K562 (cell line): ENCODE measurements at regions of chr6 and their contacts with region 1.

Region 1: DNA sequence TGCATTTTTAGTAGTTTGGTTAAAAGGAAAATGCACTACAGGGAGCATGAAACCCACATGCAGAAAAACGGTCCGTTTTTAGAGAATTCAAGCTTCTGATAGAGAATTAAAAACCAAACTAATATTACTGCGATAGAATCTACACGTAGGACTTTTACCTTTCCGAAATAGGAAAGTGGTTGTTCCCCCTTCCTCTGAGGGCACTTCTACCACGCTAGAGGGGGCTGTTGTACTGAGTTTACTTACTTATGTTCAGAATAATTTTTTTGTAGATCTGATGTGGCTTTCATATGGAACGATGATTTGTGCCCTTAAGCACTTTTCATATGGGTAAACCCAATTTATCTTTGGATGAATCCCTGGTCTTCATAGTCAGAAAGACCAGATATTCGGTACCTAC is 264.3 kb upstream of the PLN start:
- DNase-seq: peak; percentile 39 to 62 (median 44)
- ATAC-seq: peak; percentile 88
- H3K4me3 ChIP-seq: no peak overlapping the region
- H3K27ac ChIP-seq: no peak overlapping the region
- H3K4me1 ChIP-seq: no peaks in the 10 kb centered on the region
- H3K27me3 ChIP-seq: peaks cover 4 to 8% of the 10 kb centered on the region in 2 experiments; a peak in 3 of 5 replicates
- CTCF ChIP-seq: peak; percentile 45 to 76 (median 67); a peak in 5 of 6 replicates
- EP300 ChIP-seq: no peak
- POLR2A ChIP-seq: no peak
- RAD21 ChIP-seq: peak; percentile 79 to 82

Region 2: DNA sequence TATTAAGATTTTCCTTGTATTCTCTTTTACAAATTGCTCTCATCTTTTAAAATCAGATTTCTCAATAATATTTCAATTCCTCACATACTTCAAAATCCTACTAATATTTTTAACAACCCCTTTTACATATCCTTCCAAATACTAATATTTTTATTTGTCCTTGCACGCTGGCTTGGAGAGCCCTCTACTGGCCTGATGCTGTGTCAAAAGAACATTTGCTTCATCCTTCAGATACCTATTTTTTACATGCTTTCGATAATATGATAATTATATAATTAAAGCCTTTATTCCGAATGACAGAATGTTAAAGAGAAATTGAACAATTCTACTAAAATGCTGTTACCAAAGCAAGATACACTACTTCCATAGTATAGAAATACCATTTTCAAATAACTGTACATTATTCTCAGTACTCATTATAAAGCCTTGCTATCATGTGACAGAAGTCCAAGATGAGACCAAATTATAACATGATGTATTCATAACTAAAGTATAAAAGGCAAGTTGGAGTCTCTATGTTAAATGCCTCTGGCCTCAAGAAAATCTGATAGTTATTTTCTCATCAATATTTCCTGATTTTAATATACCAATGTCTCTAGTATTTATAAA is 225.3 kb after region 1 on chr6:
- CTCF ChIA-PET with region 1: interaction called, 5 read pairs
- POLR2A ChIA-PET with region 1: no interaction called
- in situ Hi-C with region 1: no loop called
- intact Hi-C with region 1: loop called (anchors 2 kb)
- DNase-seq: peak in 3 of 4 experiments; percentile 11 to 41 (median 16)
- ATAC-seq: no peak
- H3K4me3 ChIP-seq: no peak overlapping the region
- H3K27ac ChIP-seq: no peak overlapping the region
- H3K4me1 ChIP-seq: peaks cover 3 to 10% of the 10 kb centered on the region in 2 experiments; a peak in 2 of 5 replicates
- H3K27me3 ChIP-seq: no peaks in the 10 kb centered on the region
- CTCF ChIP-seq: peak; percentile 47 to 66 (median 60); a peak in 5 of 6 replicates
- EP300 ChIP-seq: no peak
- POLR2A ChIP-seq: no peak
- RAD21 ChIP-seq: peak; percentile 54 to 63

Region 3: GRCh38 chr6:118580585-118581419 is 297.0 kb after region 1 on chr6:
- CTCF ChIA-PET with region 1: interaction called, 3 read pairs
- POLR2A ChIA-PET with region 1: no interaction called
- in situ Hi-C with region 1: no loop called
- intact Hi-C with region 1: loop called (anchors 1 kb)
- DNase-seq: peak; percentile 37 to 72 (median 40)
- ATAC-seq: peak; percentile 93
- H3K4me3 ChIP-seq: no peak overlapping the region
- H3K27ac ChIP-seq: no peak overlapping the region
- H3K4me1 ChIP-seq: peaks cover 0 to 14% of the 10 kb centered on the region in 2 experiments; a peak in 3 of 5 replicates
- H3K27me3 ChIP-seq: no peaks in the 10 kb centered on the region
- CTCF ChIP-seq: peak; percentile 60 to 65 (median 61)
- EP300 ChIP-seq: no peak
- POLR2A ChIP-seq: no peak
- RAD21 ChIP-seq: peak; percentile 65 to 74

Region 4: DNA sequence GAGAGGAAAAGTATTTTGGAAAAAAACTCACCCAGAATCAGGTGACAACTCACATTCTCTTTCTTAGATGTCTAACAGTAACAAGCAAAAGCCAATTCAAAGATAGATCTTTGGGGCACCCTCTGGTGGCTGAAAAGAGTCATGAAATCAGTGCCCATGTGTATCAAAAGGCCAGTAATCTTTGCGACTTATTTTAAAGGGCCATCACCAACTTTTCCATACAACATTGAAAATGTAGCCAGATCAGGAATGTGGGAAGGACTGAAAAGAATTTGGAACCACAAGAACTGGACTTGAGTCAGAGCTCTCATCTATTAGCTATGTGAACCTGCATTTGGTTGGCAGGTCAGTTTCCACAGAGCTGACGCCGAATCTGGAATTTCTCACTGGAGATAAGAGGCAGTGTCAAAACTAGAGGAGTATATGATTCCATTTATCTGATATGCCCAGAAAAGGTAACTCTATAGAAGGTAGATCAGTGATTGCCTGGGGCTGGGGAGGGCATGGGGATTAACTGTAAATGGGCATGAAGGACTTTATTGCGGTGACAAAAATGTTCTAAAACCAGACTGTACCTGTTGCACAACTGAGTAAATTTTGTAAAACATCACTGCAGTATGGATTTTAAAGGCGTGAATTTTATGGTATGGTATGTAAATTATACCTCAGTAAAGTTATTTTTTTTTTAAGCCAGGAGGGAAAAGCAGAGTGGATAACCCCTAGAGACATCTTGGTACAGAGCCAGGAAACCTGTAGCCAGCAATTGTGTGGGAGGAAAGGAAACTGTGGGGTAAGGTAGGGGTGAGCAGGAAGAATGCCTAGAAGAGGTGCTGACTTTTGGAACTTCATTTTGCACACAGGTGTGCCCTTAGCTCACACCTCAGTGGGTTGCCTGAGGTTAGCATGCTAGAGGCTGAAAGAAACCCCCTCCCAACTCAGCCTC is 493.1 kb after region 1 on chr6:
- CTCF ChIA-PET with region 1: interaction called, 10 read pairs
- POLR2A ChIA-PET with region 1: no interaction called
- in situ Hi-C with region 1: no loop called
- intact Hi-C with region 1: loop called (anchors 5 kb)
- DNase-seq: peak; percentile 60 to 74 (median 62)
- ATAC-seq: peak; percentile 87
- H3K4me3 ChIP-seq: no peak overlapping the region
- H3K27ac ChIP-seq: no peak overlapping the region
- H3K4me1 ChIP-seq: peaks cover 0 to 3% of the 10 kb centered on the region in 2 experiments; a peak in 1 of 5 replicates
- H3K27me3 ChIP-seq: peaks cover 13 to 16% of the 10 kb centered on the region in 2 experiments; a peak in 4 of 5 replicates
- CTCF ChIP-seq: peak; percentile 64 to 85 (median 67); a peak in 5 of 6 replicates
- EP300 ChIP-seq: no peak
- POLR2A ChIP-seq: no peak
- RAD21 ChIP-seq: peak; percentile 82 to 88

Region 5: DNA sequence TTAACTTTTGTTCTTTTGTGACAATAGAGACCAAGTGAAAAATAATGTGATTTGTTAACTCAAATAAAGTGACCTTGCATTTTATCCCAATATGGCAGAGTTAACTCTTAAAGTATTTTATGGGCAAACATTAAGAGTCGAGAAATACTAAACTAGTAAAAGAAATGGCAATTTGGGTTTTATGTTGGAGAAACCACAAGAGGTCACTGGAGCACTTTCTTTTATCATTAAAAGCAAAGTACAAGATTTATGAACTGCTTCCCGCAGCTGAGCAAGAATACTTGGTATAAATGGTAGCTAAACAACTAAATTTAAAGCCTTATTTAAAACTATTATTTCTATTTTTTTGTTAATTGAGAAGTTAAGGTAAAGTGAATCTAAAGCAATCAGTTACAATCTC is 684.6 kb after region 1 on chr6:
- CTCF ChIA-PET with region 1: no interaction called
- POLR2A ChIA-PET with region 1: no interaction called
- in situ Hi-C with region 1: no loop called
- intact Hi-C with region 1: loop called (anchors 10 kb)
- DNase-seq: peak in 1 of 4 experiments; percentile 49
- ATAC-seq: peak; percentile 78
- H3K4me3 ChIP-seq: no peak overlapping the region
- H3K27ac ChIP-seq: no peak overlapping the region
- H3K4me1 ChIP-seq: no peaks in the 10 kb centered on the region
- H3K27me3 ChIP-seq: no peaks in the 10 kb centered on the region
- CTCF ChIP-seq: peak; percentile 23 to 73 (median 32); a peak in 3 of 6 replicates
- EP300 ChIP-seq: no peak
- POLR2A ChIP-seq: no peak
- RAD21 ChIP-seq: peak; percentile 83